Head of caudate nucleus (tissue), 42 donors: ENCODE measurements at regions of chr7 and their contacts with region 1.

Region 1: GRCh38 chr7:28626624-28627262 is 214.4 kb downstream of the CREB5 start:
- DNase-seq: peak in 12 of 42 donors; percentile 18 to 67 (median 28)

Region 2: GRCh38 chr7:28389504-28390395 is 237.0 kb before region 1 on chr7:
- intact Hi-C with region 1: loop called (anchors 5 kb)
- DNase-seq: peak in 15 of 42 donors; percentile 5 to 61 (median 27)

Region 3: DNA sequence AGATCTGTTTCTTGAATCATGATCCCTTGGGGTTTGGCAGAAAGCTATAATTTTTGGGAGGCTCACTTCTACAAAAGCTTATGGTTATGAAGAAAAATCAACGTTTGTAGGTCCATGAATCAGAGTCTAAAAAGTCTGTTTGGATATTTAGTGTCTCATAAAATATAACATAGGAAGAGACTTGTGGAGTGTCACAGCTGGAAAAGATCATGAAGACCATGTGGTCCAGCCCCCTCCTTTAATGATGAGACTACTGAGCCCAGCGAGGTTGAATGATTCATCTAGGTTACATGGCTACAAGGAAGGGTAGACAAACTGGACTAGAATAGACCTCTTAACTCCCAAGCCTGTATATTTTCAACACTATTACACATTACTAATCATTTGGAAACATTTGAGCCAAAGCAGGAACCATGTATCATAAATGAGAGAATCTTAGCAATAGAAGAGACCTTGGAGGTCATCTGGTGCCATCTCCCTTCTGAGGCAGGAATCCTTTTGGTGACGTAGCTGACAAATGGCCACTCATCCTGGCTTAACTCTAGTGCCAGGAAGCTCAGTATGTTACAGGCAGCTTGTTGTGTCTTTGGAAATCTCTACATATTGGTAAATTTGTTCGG is 61.9 kb before region 1 on chr7:
- intact Hi-C with region 1: no loop called
- DNase-seq: no peak

Region 4: DNA sequence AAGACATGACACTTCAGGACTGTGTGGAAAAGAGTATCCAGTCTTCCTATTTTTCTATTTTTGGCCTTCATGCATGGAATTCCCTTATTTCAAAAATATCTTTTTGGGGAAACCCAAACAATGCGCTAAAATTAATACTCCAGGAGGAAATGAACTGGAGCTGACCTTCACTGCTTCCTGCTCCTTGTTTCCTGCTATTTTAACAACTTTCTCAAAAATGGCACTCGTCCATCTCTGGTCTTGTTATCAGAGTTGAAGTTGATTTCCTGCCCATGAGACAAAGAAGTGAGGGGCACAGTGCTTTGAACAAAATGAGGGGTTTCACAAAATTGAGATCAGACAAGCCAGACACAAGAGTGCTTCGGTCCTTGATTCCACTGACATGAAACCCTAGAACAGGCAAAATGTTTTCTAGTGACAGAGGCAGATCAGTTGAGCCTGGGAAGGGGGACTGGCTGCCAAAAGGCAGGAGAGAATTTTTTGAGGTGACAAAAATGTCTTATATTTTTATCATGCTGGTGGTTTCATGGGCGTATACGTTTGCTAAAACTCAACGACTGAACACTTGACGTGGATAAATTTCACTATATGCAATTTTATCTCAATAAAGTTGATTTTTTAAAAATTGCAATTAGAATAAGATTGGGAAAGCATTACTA is 21.2 kb before region 1 on chr7:
- intact Hi-C with region 1: no loop called
- DNase-seq: no peak

Region 5: GRCh38 chr7:28708033-28708951 is 81.5 kb after region 1 on chr7:
- intact Hi-C with region 1: no loop called
- DNase-seq: peak; percentile 59 to 93 (median 79)